ENCODE measurements at regions of chr1 and their contacts with region 1.

Region 1: DNA sequence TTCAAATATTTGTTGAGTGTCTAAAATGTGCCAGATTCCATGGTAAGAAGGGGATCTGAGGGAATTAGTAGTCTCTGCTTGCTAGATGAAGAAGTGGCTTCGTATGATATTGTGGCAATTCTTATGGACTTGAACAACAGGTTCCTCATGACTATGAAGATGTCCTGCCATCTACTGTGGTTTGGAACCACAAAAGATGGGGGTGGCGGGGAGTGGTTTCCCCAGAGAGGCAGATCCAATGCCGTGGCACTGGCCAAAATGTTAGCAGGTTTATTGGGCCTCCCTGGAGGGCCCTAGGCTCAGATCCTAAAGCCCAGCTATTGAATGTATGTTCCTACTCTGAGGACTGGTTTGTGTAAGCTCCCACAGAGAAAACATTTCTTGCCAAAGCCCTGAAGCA is 120.8 kb downstream of the RGS2 start:
- DNase-seq: no peak
- CTCF ChIP-seq: no peak

Region 2: DNA sequence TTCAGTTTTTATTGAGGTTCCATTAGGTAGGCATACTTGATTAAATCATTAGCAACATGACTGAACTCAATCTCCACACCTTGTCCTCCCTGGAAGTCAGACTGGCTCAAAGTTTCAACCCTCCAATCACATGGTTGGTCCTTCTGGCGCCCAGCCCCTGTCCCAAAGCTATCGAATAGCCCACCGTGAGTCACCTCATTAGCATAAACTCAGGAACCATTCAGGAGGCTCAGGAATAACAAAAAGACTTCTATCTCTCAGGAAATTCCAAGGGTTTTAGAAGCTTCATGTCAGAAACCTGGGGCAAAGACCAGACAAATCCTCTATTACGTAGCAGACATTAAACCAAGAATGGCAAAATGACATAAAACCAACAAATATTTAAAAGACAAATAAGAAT is 42.2 kb before region 1 on chr1:
- CTCF ChIA-PET with region 1: no interaction called
- POLR2A ChIA-PET with region 1: no interaction called
- DNase-seq: no peak
- CTCF ChIP-seq: no peak

Region 3: GRCh38 chr1:192916021-192916420 is 13.6 kb before region 1 on chr1:
- CTCF ChIA-PET with region 1: interaction called, 18 read pairs
- POLR2A ChIA-PET with region 1: no interaction called
- DNase-seq: no peak
- CTCF ChIP-seq: no peak

Region 4: GRCh38 chr1:192941722-192942411 is 12.3 kb after region 1 on chr1:
- CTCF ChIA-PET with region 1: interaction called, 10 read pairs
- POLR2A ChIA-PET with region 1: no interaction called
- DNase-seq: no peak
- CTCF ChIP-seq: no peak

Measured in GM10248 (cell line).